ENCODE measurements at regions of chr4 and their contacts with region 1.

Region 1: DNA sequence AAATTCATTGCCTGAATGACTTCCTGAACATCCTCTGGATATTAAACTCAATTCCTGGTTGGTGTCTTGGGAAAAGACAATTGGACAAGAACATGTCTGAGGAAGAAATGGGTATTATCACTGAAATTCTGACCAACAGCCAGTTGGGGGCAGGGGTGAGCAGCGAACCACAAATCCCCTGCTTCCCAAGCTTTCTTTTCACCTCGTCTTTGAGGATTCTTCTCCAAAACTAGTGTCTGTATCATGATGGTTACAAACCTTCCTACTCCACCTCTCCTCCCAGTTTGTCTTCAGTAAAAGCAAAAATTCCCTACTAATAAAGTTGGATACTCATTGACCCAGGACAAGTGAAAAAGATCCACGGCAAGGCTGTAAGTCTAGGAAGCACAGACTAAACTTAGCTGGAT is 48.3 kb upstream of the WDR1 start:
- DNase-seq: peak; percentile 62
- ATAC-seq: no peak

Region 2: GRCh38 chr4:10403633-10404445 is 239.0 kb after region 1 on chr4:
- intact Hi-C with region 1: loop called (anchors 5 kb)
- DNase-seq: no peak
- ATAC-seq: no peak

Region 3: GRCh38 chr4:10554694-10555093 is 389.8 kb after region 1 on chr4:
- intact Hi-C with region 1: loop called (anchors 10 kb)
- DNase-seq: peak; percentile 63
- ATAC-seq: peak; percentile 84

Measured in sciatic nerve (tissue), 2 donors.